AG04449 (cell line): ENCODE measurements at regions of chr11 and their contacts with region 1.

Region 1: GRCh38 chr11:32960553-32961164 is 55.0 kb upstream of the DEPDC7 start:
- DNase-seq: peak; percentile 21
- H3K4me3 ChIP-seq: no peak overlapping the region
- CTCF ChIP-seq: peak; percentile 29

Region 2: GRCh38 chr11:32510039-32510438 is 450.6 kb before region 1 on chr11:
- CTCF ChIA-PET with region 1: no interaction called
- POLR2A ChIA-PET with region 1: no interaction called
- DNase-seq: no peak
- H3K4me3 ChIP-seq: no peak overlapping the region
- CTCF ChIP-seq: no peak

Region 3: DNA sequence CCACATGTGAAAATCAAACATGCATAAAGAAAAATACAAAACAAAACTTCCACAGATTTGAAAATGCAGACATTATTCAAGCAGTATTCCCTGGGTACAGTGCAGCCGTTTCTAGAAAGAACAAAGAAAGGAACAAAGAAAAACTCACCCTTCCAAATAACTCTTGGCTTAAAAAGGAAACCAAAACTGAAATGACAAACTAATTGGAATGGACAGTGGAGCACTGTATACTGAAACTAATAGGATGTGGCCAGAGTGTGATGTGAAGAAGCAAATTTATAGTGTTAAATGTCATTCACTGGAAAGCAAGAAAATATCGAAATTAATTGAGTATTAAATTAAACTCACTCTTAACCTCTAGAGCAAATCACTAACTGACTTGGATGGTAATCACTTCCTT is 12.7 kb before region 1 on chr11:
- CTCF ChIA-PET with region 1: interaction called, 14 read pairs
- POLR2A ChIA-PET with region 1: no interaction called
- DNase-seq: no peak
- H3K4me3 ChIP-seq: no peak overlapping the region
- CTCF ChIP-seq: no peak

Region 4: DNA sequence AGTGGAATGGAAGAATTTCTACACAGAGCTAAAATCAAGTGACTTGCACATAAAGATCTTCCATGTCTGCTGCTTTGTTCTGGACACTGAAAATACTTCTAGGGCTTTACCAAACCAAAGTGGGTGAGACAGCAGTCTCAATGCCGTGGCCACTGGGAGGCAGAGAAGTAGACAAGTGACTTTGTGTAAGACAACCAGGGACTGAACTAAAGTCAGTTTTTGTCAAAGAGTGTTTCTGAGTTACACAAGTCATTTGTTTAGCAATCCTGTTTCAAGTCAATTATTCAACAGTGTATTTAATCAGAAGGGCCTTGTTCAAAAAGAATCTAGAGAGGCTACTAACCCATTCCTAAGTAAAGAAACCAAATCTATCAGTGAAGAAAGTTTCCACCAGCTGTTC is 125.4 kb after region 1 on chr11:
- CTCF ChIA-PET with region 1: interaction called, 13 read pairs
- POLR2A ChIA-PET with region 1: no interaction called
- DNase-seq: no peak
- H3K4me3 ChIP-seq: no peak overlapping the region
- CTCF ChIP-seq: no peak